ENCODE measurements at regions of chr22 and their contacts with region 1.

Region 1: DNA sequence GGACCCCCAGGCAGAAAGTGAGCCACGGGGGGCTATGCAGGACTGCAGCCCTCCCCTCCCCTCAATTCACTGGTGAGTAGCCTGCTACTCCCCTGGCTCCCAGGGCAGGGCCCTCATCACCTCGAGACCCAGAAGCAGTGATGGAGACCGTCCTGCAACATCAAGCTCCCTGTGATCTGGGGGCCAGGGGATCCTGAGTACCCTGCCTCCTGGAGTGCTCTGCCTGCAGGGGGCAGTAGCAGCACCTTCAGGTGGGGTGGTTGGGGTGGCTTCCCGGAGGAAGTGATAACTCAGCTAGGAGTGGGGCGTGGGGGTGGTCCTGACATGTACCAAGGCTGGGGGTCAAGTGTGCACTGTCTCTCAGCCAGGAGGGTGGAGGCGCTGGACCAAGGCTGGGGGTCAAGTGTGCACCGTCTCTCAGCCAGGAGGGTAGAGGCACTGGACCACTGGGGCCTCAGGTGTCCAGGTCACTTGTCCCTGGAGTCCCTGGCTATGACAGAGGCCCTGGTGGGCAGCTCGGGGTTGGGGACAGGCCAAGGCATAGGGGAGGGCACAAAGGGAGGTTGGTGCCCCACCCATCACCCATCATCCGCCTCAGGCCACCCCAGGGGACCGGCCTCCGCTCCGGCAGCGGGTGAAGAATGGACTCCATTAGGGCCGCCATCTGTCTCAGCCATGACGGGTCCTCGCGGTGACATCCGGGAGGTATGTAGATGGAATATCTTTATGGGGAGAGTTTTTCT is 9.4 kb downstream of the RTN4R start:
- DNase-seq: no peak

Region 2: GRCh38 chr22:20079745-20080444 is 178.9 kb before region 1 on chr22 and contains the start of gene DGCR8:
- intact Hi-C with region 1: no loop called
- DNase-seq: peak; percentile 97
- total RNA-seq, gene DGCR8: 19.1 TPM

Region 3: DNA sequence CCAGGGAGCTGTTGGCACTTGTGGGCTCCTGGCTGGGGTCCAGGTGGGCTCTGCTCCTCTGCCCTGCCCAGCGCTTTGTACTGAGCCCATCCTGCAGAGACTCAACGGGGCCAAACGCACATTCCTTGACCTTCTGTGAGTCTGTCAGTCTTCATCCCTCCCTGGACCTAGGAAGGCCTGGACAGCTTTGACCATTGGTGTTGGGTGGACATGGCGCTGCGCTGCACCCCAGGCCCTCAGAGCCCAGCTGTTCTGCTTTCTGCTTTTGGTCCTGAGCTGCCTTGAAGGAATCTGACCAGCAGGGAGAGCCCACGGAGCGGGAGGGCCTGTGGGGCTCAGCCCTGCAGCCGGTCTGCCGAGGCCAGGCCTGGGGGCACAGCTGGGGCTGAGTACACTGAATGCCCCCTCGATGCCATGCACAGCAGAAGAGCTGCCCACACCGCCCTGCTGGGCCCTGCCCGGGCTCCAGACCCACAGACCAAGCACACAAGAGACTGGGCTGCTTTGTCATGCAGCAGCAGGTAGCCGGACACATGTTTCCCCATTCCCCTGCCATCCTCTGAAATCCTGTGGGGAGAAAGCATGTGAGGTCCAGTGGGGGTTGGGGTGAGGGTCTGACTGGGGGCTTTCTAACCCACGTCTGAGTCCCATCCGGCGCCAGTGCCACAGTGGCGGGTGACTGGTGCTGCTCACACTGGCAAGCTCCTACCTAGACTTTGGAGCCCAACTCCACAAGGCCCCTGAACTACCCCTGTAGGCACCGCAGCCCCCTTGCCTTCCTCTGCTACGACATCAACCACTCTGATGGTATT is 83.8 kb before region 1 on chr22:
- intact Hi-C with region 1: loop called (anchors 5 kb)
- DNase-seq: no peak

Region 4: DNA sequence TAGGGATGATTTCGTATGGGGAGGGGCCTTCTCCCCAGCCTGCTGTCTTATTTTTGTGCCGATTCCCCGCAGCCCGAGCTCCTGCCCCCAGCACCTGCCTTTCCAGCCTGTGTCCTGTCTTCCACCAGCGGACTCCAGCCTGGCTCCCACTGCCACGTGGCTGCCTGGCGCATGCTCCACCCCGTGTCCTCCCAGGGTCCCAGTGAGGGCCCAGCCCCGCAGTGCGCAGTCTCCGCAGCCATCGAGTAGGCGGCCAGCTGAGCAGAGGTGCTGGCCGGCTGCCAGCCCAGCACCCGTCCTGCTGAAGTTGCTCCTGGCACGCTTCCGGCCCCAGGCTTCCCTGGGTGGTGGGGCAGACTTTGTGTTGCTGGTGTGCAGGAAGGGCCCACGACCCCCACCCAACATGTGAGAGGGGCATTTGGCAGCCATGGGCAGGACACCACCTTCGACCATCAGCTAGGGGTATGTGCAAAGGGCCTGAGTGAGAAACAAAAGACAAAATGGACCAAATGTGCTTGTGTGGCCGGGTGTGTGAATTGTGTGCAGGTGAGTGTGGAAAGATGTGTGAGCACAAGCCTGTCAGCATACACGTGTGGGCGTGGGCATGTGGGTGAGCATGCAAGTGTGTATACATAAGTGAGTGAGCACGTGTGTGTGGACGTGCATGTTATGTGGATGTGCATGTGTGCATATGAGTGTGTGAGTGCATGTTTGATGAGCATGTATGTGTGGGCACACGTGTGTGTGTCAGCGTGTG is 46.6 kb before region 1 on chr22:
- intact Hi-C with region 1: no loop called
- DNase-seq: peak; percentile 85

Measured in cardiac septum (tissue), 1 donor.